ENCODE measurements at regions of chr18 and their contacts with region 1.

Region 1: DNA sequence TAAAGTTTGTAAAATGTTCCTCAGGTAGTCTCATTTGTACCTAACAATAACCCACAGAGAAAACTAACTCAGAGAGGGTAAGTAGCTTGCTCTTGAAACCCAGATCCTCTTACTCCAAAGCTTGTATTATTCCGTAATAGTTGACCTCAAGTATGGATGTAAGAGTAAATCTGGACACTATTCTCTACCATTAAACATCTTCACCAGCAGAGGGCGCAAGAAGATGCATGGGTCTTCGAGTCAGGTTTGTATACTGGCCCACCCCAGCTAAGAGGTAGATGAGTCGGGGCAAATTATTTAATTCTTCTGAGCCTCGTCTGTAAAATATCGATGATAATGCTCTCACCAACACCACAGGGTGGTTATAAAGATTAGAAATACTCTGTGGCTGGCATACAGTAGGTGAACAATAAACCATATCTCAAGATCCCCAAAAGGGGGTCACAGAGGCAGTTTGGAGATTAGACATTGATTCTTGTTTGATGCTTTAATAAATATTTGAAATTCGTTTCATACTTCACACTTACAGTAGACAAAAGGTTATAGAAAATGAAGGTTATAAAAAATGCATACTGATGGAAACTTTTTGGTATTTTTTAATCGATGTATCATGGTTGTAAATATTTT is 3.5 kb upstream of the CABLES1 start:
- ATAC-seq: peak in 3 of 8 experiments; percentile 25 to 50 (median 28)
- H3K4me3 ChIP-seq: no peak overlapping the region
- H3K27ac ChIP-seq: no peak overlapping the region
- H3K4me1 ChIP-seq: peaks cover under 1 to 2% of the 10 kb centered on the region in 2 donors

Region 2: GRCh38 chr18:23330423-23330822 is 198.6 kb after region 1 on chr18:
- in situ Hi-C with region 1: no loop called
- ATAC-seq: no peak
- H3K4me3 ChIP-seq: no peak overlapping the region
- H3K27ac ChIP-seq: no peak overlapping the region
- H3K4me1 ChIP-seq: no peaks in the 10 kb centered on the region

Region 3: GRCh38 chr18:23377669-23378301 is 246.0 kb after region 1 on chr18:
- in situ Hi-C with region 1: loop called in 4 of 9 experiments (anchors 10 to 25 kb)
- ATAC-seq: peak in 4 of 8 experiments; percentile 25 to 82 (median 70)
- H3K4me3 ChIP-seq: no peak overlapping the region
- H3K27ac ChIP-seq: no peak overlapping the region
- H3K4me1 ChIP-seq: no peaks in the 10 kb centered on the region

Region 4: DNA sequence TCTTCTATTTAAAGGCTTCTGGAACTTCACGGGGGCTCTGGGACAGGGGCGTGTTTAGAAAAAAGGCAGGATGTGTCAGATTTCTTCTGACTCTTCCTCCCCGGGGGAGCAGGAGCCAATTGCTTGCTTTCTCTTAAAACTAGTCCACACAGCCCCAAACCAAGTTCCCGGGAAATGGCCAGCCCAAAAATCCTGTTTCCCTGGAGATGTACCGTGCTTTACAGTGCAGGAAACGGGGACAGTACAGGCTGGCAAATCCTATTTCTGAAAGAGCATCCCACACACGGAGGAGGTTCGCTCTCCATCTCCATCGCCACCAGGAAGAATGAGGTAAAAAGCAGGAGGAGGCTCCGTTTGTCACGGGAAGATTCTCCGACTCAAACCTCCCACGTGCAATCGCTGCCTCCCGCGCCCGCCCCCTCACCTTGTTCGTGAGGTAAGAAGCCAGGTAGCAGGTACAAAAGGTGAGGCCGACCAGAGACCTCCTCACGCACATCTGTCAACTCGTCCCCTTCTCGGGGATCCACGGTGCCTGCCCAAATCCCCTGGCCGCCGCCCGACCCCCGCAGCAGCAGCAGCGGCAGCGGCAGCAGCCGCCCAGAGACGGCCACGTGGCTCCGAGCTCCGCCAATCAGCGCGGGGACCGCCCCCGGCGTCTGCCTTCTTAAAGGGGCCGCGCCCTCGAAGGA is 305.7 kb after region 1 on chr18:
- in situ Hi-C with region 1: loop called in 1 of 9 experiments (anchors 25 kb)
- ATAC-seq: peak; percentile 70 to 100 (median 99)
- H3K4me3 ChIP-seq: peak overlapping the region; percentile 54 to 73 (median 68)
- H3K27ac ChIP-seq: no peak overlapping the region
- H3K4me1 ChIP-seq: peaks cover 3 to 4% of the 10 kb centered on the region in 2 donors

Region 5: DNA sequence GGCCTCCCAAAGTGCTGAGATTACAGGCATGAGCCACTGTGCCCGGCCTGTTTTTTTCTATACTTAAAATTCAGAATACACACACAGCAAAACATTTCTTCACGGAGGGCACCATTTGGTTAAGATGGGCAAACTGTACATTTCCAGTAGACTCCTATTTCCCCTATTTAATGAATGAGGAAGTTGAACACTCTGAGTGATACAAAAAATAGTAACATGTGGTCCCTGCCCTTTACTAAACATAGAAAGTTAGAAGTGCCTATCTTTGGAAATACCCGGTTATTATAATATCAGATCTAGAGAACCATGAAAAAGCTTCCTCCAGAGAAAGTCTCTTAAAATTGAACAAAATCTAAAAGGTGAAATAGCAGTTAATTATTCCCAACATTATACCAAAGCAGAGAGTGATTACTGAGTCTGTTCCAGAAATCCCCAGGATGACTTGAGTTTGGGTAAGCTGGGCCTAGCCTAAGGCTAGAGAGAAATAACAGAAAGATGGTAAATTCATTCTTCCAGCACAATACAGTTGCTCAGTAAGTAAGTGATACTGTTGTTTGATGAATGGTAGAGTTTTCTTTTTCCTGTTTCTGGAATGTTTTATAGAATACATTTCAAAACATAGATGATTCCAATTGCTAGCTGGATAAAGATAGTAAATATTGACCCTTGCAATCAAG is 348.2 kb after region 1 on chr18:
- in situ Hi-C with region 1: no loop called
- ATAC-seq: no peak
- H3K4me3 ChIP-seq: no peak overlapping the region
- H3K27ac ChIP-seq: no peak overlapping the region
- H3K4me1 ChIP-seq: no peaks in the 10 kb centered on the region